Stomach (tissue), 19 donors: ENCODE measurements at regions of chr14 and their contacts with region 1.

Region 1: DNA sequence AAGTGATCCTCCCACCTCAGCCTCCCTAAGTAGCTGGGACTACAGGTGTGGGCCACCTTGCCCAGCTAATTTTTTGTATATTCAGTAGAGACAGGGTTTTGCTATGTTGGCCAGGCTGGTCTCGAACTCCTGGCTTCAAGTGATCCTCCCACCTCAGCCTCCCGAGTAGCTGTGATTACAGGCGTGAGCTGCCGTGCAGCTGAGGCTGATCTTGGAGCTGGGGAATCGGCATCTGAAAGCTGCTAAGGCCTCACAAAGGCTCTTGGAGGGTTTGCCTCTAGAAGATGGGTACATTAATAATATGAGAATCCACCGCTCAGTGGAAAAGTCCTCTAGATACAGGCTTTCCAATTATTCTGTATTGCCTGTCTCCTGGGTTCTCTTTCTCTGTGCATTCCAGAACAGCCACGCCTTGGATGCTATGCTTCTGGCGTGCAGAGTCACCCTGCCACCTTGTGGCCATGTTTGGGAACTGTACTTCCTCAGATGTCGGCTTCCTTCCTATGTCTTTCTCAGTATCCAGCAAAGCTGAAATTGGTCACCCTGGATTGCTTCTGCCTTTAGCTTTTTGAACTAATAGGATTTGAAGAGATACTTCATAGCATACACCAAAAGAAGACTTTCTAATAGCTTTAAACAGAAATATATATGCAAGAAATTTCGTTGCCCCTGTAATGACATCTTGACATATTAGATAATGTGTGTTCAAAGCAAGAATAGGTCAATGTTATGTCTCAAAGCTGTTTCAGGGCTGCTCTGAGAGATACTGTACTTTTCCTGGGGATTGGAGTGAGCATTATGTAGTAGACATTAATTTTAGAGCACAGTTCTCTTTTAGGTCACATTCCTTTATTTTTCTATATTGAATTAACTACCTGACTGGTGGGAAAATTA is 75.4 kb downstream of the SNAPC1 start:
- DNase-seq: peak; percentile 84 to 93
- H3K4me3 ChIP-seq: no peak overlapping the region
- H3K27ac ChIP-seq: no peak overlapping the region
- H3K4me1 ChIP-seq: peaks cover 0 to 5% (median 0%) of the 10 kb centered on the region in 4 donors
- H3K27me3 ChIP-seq: no peaks in the 10 kb centered on the region
- CTCF ChIP-seq: peak in 6 of 7 experiments; percentile 28 to 94 (median 91)
- EP300 ChIP-seq: no peak
- POLR2A ChIP-seq: no peak

Region 2: DNA sequence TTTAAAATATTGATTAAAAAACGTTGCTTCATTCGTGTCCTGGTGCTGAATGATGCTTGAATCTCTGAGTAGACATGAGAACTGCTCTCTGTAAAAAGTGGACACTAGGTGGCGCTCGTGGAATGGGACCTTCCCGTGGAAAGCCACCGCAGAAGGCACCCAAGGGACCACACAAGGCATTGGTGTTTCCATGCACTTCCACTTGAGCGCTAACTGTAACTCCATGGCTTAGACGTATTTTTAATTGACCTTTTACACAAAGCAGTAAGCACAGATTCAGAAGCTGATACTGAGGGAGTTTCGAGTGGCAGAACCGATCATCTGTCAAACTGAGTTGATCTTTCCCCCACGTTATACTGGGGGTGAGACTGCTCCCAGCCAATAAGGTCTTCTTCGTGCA is 380.9 kb before region 1 on chr14:
- intact Hi-C with region 1: loop called (anchors 5 kb)
- DNase-seq: peak; percentile 88 to 90
- H3K4me3 ChIP-seq: no peak overlapping the region
- H3K27ac ChIP-seq: no peak overlapping the region
- H3K4me1 ChIP-seq: peaks cover 0 to 20% (median 3%) of the 10 kb centered on the region in 4 donors
- H3K27me3 ChIP-seq: no peaks in the 10 kb centered on the region
- CTCF ChIP-seq: peak in 5 of 7 experiments; percentile 50 to 88 (median 73)
- EP300 ChIP-seq: no peak
- POLR2A ChIP-seq: no peak